Stomach (tissue), 19 donors: ENCODE measurements at regions of chr6 and their contacts with region 1.

Region 1: GRCh38 chr6:3977875-3978711 is 100.8 kb downstream of the FAM217A start:
- DNase-seq: peak in 1 of 2 donors; percentile 85
- H3K4me3 ChIP-seq: no peak overlapping the region
- H3K27ac ChIP-seq: no peak overlapping the region
- H3K4me1 ChIP-seq: no peaks in the 10 kb centered on the region
- H3K27me3 ChIP-seq: no peaks in the 10 kb centered on the region
- CTCF ChIP-seq: peak in 5 of 7 experiments; percentile 25 to 38 (median 31)
- EP300 ChIP-seq: no peak
- POLR2A ChIP-seq: no peak

Region 2: GRCh38 chr6:3277851-3278416 is 700.2 kb before region 1 on chr6:
- intact Hi-C with region 1: loop called (anchors 10 kb)
- DNase-seq: no peak
- H3K4me3 ChIP-seq: no peak overlapping the region
- H3K27ac ChIP-seq: no peak overlapping the region
- H3K4me1 ChIP-seq: peaks cover 0 to 30% (median 11%) of the 10 kb centered on the region in 4 donors
- H3K27me3 ChIP-seq: no peaks in the 10 kb centered on the region
- CTCF ChIP-seq: no peak
- EP300 ChIP-seq: no peak
- POLR2A ChIP-seq: no peak

Region 3: GRCh38 chr6:4103929-4104328 is 125.8 kb after region 1 on chr6:
- intact Hi-C with region 1: no loop called
- DNase-seq: peak; percentile 37 to 52
- H3K4me3 ChIP-seq: no peak overlapping the region
- H3K27ac ChIP-seq: peak overlapping the region; percentile 25 to 61 (median 36)
- H3K4me1 ChIP-seq: peaks cover 9 to 35% (median 22%) of the 10 kb centered on the region in 4 donors
- H3K27me3 ChIP-seq: no peaks in the 10 kb centered on the region
- CTCF ChIP-seq: no peak
- EP300 ChIP-seq: no peak
- POLR2A ChIP-seq: no peak